PC-9 (cell line): ENCODE measurements at regions of chr14 and their contacts with region 1.

Region 1: GRCh38 chr14:64986578-64987571 is at the start of gene FNTB:
- DNase-seq: peak; percentile 93 to 96
- H3K4me3 ChIP-seq: peak within 1 kb of the TSS; percentile 86
- H3K27ac ChIP-seq: peak within 1 kb of the TSS; percentile 77
- H3K4me1 ChIP-seq: peaks cover 21% of the 10 kb centered on the region
- H3K27me3 ChIP-seq: no peaks in the 10 kb centered on the region
- CTCF ChIP-seq: peak; percentile 61; the same call in 1 of the 2 replicates
- total RNA-seq, gene FNTB: 23.5 and 35.3 TPM in 2 replicates

Region 2: GRCh38 chr14:64338616-64339316 is 648.1 kb before region 1 on chr14:
- CTCF ChIA-PET with region 1: no interaction called
- POLR2A ChIA-PET with region 1: no interaction called
- intact Hi-C with region 1: loop called (anchors 5 kb)
- DNase-seq: peak; percentile 98
- H3K4me3 ChIP-seq: peak overlapping the region; percentile 94
- H3K27ac ChIP-seq: peak overlapping the region; percentile 66
- H3K4me1 ChIP-seq: peaks cover 20% of the 10 kb centered on the region
- H3K27me3 ChIP-seq: no peaks in the 10 kb centered on the region
- CTCF ChIP-seq: no peak

Region 3: DNA sequence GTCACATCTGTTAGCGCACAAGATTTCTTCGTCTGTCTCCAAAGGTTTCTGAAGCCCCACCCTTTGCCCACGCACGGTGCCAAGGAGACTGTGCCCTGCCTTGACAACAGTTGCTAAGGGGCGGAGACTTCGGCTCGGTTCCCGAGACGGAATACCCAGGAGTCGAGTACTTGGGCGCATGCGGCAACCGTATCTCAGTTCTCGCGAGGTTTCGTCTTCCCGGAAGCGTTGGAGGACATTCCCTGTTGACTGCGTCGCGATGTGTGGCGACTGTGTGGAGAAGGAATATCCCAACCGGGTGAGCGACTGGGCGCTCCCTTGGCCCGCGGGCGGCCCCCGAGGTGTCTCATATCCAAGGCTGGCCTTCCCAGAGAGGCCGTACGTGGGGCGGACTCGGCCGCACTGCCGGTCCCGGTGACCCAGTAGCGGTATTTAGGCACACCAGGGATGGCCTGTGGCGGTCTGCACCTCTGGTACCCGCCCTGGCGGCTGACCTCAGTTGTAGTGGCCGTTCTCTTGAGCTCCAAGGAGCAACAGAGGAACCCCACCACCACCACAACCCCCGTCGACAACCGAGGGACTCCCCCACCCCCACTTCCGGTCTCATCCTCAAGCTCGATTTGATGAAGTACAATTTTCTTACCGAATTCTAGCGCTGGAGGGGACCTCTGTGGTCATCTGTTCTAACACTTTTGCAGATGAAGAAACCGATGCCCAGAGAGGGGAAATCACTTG is 72.5 kb before region 1 on chr14 and contains the start of gene CHURC1:
- CTCF ChIA-PET with region 1: interaction called, 17 read pairs
- POLR2A ChIA-PET with region 1: no interaction called
- intact Hi-C with region 1: loop called (anchors 1 kb)
- DNase-seq: peak; percentile 98 to 100
- H3K4me3 ChIP-seq: peak within 1 kb of the TSS; percentile 70
- H3K27ac ChIP-seq: peak within 1 kb of the TSS; percentile 62
- H3K4me1 ChIP-seq: peaks cover 20% of the 10 kb centered on the region
- H3K27me3 ChIP-seq: no peaks in the 10 kb centered on the region
- CTCF ChIP-seq: no peak
- total RNA-seq, gene CHURC1: 88.1 and 91.8 TPM in 2 replicates

Region 4: GRCh38 chr14:64960762-64961278 is 26.1 kb before region 1 on chr14:
- CTCF ChIA-PET with region 1: interaction called, 3 read pairs
- POLR2A ChIA-PET with region 1: no interaction called
- intact Hi-C with region 1: loop called (anchors 2 kb)
- DNase-seq: peak; percentile 85 to 92
- H3K4me3 ChIP-seq: no peak overlapping the region
- H3K27ac ChIP-seq: peak overlapping the region; percentile 44
- H3K4me1 ChIP-seq: peaks cover 53% of the 10 kb centered on the region
- H3K27me3 ChIP-seq: no peaks in the 10 kb centered on the region
- CTCF ChIP-seq: peak; percentile 51; the same call in 1 of the 2 replicates

Region 5: DNA sequence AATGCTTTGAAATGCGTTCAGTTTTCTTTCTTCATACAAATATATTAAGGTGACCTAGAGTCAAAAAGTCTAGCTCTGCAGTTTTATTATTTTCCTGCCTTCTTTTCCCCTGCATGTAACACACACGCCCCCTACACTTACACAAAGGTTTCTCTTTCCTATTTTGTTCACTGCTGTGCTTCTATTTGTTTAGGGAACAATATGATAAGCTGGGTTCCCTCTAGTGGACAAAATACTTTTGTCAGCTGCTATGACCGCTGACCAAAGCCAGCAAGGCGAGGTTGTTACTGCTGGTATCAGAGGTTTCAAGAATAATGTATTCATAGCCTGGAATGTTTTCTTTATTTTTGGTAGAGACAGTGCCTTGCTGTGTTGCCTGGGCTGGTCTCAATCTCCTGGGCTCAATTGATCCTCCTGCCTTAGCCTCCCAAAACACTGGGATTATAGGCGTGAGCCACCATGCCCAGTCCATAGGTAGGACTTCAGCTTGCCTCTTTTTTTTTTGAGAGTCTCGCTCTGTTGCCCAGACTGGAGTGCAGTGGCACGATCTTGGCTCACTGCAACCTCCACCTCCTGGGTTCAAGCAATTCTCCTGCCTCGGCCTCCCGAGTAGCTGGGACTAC is 33.2 kb after region 1 on chr14:
- CTCF ChIA-PET with region 1: interaction called, 38 read pairs
- POLR2A ChIA-PET with region 1: interaction called, 3 read pairs
- intact Hi-C with region 1: loop called (anchors 1 kb)
- DNase-seq: peak; percentile 47 to 83
- H3K4me3 ChIP-seq: no peak overlapping the region
- H3K27ac ChIP-seq: peak overlapping the region; percentile 30; the same call in 1 of the 2 replicates
- H3K4me1 ChIP-seq: peaks cover 5% of the 10 kb centered on the region; the same call in 1 of the 2 replicates
- H3K27me3 ChIP-seq: no peaks in the 10 kb centered on the region
- CTCF ChIP-seq: peak; percentile 88